Activated B cell treated with CpG ODN at 0.5 μM for 24 hours (primary cell): ENCODE measurements at regions of chr1 and their contacts with region 1.

Region 1: DNA sequence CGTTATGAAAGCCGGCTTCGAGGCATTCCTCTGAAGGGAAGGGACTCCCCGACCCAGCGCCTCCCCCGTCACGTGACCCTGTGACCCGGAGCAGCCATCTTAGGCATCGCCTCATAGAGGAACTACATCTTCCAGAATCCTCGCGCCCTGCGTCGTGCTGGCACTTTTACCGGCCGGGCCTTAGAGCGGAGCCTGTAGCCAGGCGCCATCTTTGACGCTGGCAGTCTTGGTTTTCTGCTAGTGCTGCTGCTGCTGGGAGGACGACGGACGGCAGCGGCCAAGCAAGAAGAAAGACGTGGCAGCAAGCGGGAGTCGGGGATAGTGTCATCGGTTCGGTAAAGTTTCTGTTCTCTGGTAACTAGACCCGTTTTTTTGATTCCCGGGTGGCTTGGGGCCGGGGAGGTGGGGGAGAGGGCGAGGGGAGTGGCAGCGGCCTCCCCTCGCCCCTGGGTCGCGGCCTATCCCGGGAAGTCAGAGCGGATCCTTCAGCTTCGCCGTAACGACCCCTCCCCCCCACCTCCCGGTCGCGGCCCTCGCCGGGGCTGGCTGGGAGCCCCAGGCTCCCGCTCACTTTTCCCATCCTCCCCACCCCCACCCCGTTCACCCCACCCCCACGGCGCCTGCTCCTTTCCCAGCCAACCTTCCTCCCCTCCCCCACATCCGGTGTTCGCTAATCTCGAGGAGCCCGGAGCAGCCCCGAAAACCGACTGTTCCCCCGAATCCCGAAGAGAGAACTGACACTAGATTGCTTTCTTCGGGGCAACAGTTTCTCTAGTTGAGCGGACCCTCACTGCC is at the starts of genes ZBED6 and ZC3H11A:
- DNase-seq: peak; percentile 90
- ATAC-seq: peak; percentile 97
- H3K4me3 Mint-ChIP-seq: peak within 1 kb of the TSS; percentile 99
- H3K27ac Mint-ChIP-seq: peak within 1 kb of the TSS; percentile 95
- H3K4me1 Mint-ChIP-seq: peaks cover 51% of the 10 kb centered on the region
- H3K27me3 Mint-ChIP-seq: no peaks in the 10 kb centered on the region
- CTCF ChIP-seq: no peak
- total RNA-seq, gene ZBED6: 26.3 and 31.4 TPM in 2 replicates
- total RNA-seq, gene ZC3H11A: 85.6 and 91.6 TPM in 2 replicates

Region 2: GRCh38 chr1:203754455-203754864 is 41.2 kb before region 1 on chr1:
- CTCF ChIA-PET with region 1: no interaction called
- POLR2A ChIA-PET with region 1: interaction called, 7 read pairs
- intact Hi-C with region 1: loop called (anchors 1 kb)
- DNase-seq: no peak
- ATAC-seq: peak; percentile 70
- H3K4me3 Mint-ChIP-seq: peak overlapping the region; percentile 60
- H3K27ac Mint-ChIP-seq: peak overlapping the region; percentile 96
- H3K4me1 Mint-ChIP-seq: peaks cover 41% of the 10 kb centered on the region
- H3K27me3 Mint-ChIP-seq: no peaks in the 10 kb centered on the region
- CTCF ChIP-seq: no peak

Region 3: GRCh38 chr1:203765029-203765837 is 30.4 kb before region 1 on chr1 and contains the start of gene LAX1:
- CTCF ChIA-PET with region 1: no interaction called
- POLR2A ChIA-PET with region 1: interaction called, 8 read pairs
- intact Hi-C with region 1: loop called (anchors 1 kb)
- DNase-seq: peak; percentile 22
- ATAC-seq: peak; percentile 84
- H3K4me3 Mint-ChIP-seq: peak within 1 kb of the TSS; percentile 91
- H3K27ac Mint-ChIP-seq: peak within 1 kb of the TSS; percentile 99
- H3K4me1 Mint-ChIP-seq: peaks cover 37% of the 10 kb centered on the region
- H3K27me3 Mint-ChIP-seq: no peaks in the 10 kb centered on the region
- CTCF ChIP-seq: no peak
- total RNA-seq, gene LAX1: 12.0 and 13.5 TPM in 2 replicates

Region 4: GRCh38 chr1:203861379-203862184 is 65.9 kb after region 1 on chr1 and contains the start of gene SNRPE:
- CTCF ChIA-PET with region 1: no interaction called
- POLR2A ChIA-PET with region 1: no interaction called
- intact Hi-C with region 1: loop called (anchors 1 kb)
- DNase-seq: peak; percentile 92
- ATAC-seq: peak; percentile 98
- H3K4me3 Mint-ChIP-seq: peak within 1 kb of the TSS; percentile 97
- H3K27ac Mint-ChIP-seq: peak within 1 kb of the TSS; percentile 98
- H3K4me1 Mint-ChIP-seq: peaks cover 24% of the 10 kb centered on the region
- H3K27me3 Mint-ChIP-seq: no peaks in the 10 kb centered on the region
- CTCF ChIP-seq: no peak
- total RNA-seq, gene SNRPE: 149 and 156 TPM in 2 replicates

Region 5: GRCh38 chr1:204128964-204129896 is 333.6 kb after region 1 on chr1:
- CTCF ChIA-PET with region 1: no interaction called
- POLR2A ChIA-PET with region 1: no interaction called
- intact Hi-C with region 1: loop called (anchors 1 kb)
- DNase-seq: peak; percentile 41
- ATAC-seq: peak; percentile 89
- H3K4me3 Mint-ChIP-seq: no peak overlapping the region
- H3K27ac Mint-ChIP-seq: no peak overlapping the region
- H3K4me1 Mint-ChIP-seq: peaks cover 8% of the 10 kb centered on the region
- H3K27me3 Mint-ChIP-seq: peaks cover 7% of the 10 kb centered on the region
- CTCF ChIP-seq: no peak

Region 6: GRCh38 chr1:204232526-204232925 is 436.9 kb after region 1 on chr1:
- CTCF ChIA-PET with region 1: no interaction called
- POLR2A ChIA-PET with region 1: no interaction called
- intact Hi-C with region 1: no loop called
- DNase-seq: no peak
- ATAC-seq: no peak
- H3K4me3 Mint-ChIP-seq: no peak overlapping the region
- H3K27ac Mint-ChIP-seq: no peak overlapping the region
- H3K4me1 Mint-ChIP-seq: no peaks in the 10 kb centered on the region
- H3K27me3 Mint-ChIP-seq: peaks cover 4% of the 10 kb centered on the region
- CTCF ChIP-seq: no peak